ENCODE measurements at regions of chr14 and their contacts with region 1.

Region 1: GRCh38 chr14:65356327-65356852 is 56.1 kb upstream of the FUT8 start:
- DNase-seq: peak; percentile 100
- H3K4me3 ChIP-seq: no peak overlapping the region
- H3K27ac ChIP-seq: peak overlapping the region; percentile 77
- H3K4me1 ChIP-seq: peaks cover 57% of the 10 kb centered on the region
- H3K27me3 ChIP-seq: no peaks in the 10 kb centered on the region
- CTCF ChIP-seq: no peak

Region 2: DNA sequence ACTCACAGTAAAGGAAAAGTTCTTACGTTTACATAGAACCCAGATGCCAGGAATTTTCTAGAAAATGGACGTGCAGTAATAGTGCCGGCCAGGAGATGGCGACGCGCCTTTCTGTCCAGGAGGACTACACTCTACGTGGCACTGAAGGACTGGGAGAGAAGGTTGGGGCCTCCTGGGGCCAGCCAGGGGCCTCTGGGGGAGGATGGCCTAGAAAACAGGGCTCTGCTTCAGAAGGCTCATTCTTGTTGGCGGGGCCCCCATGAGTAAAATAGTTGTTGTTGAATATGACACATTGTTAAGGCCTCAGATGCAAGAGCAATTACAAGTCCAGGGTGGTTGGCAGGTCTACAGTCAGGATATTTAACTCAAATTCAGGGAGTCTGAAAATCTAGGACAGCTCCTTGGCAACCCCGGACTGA is 133.9 kb before region 1 on chr14:
- CTCF ChIA-PET with region 1: no interaction called
- dilution Hi-C with region 1: no loop called
- in situ Hi-C with region 1: loop called in 1 of 2 experiments (anchors 10 kb)
- intact Hi-C with region 1: loop called (anchors 5 kb)
- DNase-seq: peak; percentile 46
- H3K4me3 ChIP-seq: no peak overlapping the region
- H3K27ac ChIP-seq: no peak overlapping the region
- H3K4me1 ChIP-seq: peaks cover 11% of the 10 kb centered on the region
- H3K27me3 ChIP-seq: no peaks in the 10 kb centered on the region
- CTCF ChIP-seq: peak; percentile 90 to 92

Region 3: DNA sequence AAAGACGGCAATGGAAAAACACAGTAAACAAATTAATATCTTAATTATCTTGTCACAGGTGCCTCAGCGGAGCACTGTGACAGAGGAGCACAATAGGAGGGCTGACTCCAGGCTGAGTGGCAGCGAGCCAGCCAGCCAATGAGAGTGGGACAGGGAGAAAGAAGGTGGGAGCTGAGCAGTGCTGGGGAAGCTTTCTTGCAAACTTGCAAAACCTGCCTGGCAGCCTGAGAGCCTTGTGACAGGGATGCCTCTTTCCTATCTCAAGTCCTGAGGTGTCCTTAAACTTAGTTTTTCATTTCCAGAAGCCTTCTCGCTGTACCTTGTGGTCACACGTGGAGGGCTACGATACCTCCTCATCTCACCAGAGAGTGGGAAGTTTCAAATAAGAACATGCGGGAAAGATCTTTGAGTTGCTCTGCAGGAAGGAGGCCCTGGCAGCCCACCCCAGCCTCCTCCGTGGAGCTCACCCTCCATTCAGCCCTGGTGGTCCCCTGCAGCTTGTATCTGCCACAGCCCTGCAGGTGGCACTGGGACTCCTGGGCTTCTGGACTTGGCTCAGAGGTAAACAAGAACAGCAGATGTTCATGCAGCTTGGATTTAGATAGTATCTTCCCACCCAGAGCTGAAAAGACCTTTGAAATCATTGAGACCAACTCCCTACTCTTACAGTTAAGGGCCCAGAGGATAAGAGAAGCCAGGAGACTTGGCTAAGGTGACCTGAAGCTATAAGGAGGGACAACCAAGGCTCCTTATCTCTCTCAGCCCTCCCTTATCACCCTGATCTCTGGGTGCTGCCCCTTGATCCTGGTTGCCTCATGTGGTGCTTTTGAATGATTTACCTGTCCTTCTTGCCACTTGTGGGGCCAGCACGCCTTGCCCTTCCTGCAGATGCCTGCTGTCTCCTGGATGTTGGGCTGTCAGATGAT is 100.6 kb before region 1 on chr14:
- CTCF ChIA-PET with region 1: no interaction called
- dilution Hi-C with region 1: loop called (anchors 5 kb)
- in situ Hi-C with region 1: no loop called
- intact Hi-C with region 1: no loop called
- DNase-seq: peak; percentile 84
- H3K4me3 ChIP-seq: no peak overlapping the region
- H3K27ac ChIP-seq: peak overlapping the region; percentile 88
- H3K4me1 ChIP-seq: peaks cover 46% of the 10 kb centered on the region
- H3K27me3 ChIP-seq: no peaks in the 10 kb centered on the region
- CTCF ChIP-seq: peak in 1 of 2 donors; percentile 2

Region 4: DNA sequence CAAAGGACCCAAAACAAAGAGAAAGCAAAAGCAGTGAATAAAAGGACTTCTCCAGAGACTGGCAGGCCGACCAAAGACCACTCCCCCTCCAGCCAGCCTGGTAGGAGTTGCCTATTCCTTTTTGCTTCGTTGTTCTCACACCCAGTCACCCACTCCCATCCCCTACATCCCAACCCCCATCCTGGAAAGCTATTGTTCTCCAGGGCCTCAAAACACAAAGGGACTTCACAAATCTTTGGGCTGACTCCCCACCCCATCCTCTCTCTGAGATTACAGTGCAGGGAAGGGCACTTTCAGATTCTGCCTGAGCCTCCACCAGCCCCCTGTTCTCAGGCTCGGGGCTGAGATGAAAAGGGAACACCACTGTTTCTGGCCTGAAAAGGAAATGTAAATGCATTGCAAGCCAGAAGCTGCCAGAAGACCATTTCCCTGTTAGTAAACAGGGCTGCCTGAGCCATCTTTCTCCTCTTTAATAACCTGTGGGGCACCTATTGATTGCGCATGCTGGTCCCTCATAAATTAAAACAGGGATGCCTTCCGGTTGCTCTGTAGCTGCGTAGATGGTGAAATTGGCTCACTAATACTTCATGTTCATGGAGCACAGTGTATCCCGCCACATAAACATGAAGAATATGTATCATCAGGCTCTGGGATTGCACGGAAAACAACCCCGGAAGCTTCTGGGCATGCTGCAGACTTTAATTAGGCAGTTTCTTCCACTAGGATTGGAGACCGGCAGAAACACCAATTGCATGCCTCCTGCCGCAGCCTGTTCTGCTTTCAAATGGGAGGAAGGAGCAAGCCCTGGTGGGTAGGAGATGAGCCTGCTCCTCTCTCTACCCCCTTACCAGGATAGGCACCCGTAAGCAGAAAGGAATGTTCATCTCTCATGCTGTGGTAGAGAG is 74.1 kb before region 1 on chr14:
- CTCF ChIA-PET with region 1: no interaction called
- dilution Hi-C with region 1: no loop called
- in situ Hi-C with region 1: no loop called
- intact Hi-C with region 1: loop called (anchors 5 kb)
- DNase-seq: peak; percentile 57
- H3K4me3 ChIP-seq: no peak overlapping the region
- H3K27ac ChIP-seq: no peak overlapping the region
- H3K4me1 ChIP-seq: peaks cover 11% of the 10 kb centered on the region
- H3K27me3 ChIP-seq: no peaks in the 10 kb centered on the region
- CTCF ChIP-seq: no peak

Region 5: DNA sequence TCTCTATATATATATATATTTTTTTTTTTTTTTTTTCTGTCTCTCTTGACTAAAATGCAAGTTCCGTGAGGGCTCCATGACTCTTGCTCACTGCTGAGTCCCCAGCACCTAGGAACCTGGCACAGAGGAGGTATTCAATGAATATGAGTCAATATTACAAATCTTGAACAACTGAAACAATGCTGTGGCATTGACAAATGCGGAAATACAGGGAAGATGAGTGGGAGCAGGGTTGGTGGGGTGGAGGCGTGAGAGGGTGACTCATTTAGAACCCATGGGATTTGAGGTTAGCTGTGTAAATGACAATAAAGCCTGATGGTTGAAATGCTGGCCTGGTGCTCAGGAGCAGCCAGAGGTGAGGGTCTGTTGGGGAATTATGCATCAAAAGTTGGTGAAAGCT is 65.6 kb before region 1 on chr14:
- CTCF ChIA-PET with region 1: no interaction called
- dilution Hi-C with region 1: no loop called
- in situ Hi-C with region 1: no loop called
- intact Hi-C with region 1: loop called (anchors 5 kb)
- DNase-seq: peak; percentile 97
- H3K4me3 ChIP-seq: no peak overlapping the region
- H3K27ac ChIP-seq: peak overlapping the region; percentile 53
- H3K4me1 ChIP-seq: peaks cover 11% of the 10 kb centered on the region
- H3K27me3 ChIP-seq: no peaks in the 10 kb centered on the region
- CTCF ChIP-seq: no peak

Region 6: DNA sequence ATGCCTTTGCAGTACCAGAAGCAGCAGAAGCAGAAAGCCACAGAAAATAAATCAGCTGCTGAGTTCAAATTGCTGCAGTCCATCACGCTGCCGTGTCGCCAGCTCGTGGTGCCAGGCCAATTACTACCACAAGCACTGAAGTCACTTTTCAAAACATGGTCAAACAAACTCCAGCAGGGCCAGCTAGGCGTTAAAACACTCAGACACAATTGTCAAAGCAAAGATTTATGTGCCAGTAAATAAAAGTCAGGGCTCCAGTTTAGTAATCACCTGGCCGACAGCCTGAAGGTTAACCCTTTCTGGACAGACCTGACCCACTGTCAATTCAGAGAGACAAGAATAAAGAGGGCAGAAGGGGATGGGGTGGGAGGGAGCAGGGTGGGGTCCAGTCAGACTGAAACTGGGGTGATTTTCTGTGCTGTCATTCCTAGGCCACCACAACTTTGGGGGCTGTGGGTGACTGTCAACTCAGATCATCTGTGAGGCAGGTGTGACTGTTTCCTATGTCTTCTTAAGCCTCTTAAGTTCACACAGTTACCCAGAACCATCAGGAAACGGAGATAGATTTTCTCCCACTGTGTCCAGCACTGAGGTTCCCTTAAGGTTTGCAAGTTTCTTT is 53.7 kb before region 1 on chr14:
- CTCF ChIA-PET with region 1: no interaction called
- dilution Hi-C with region 1: no loop called
- in situ Hi-C with region 1: no loop called
- intact Hi-C with region 1: no loop called
- DNase-seq: no peak
- H3K4me3 ChIP-seq: no peak overlapping the region
- H3K27ac ChIP-seq: no peak overlapping the region
- H3K4me1 ChIP-seq: no peaks in the 10 kb centered on the region
- H3K27me3 ChIP-seq: no peaks in the 10 kb centered on the region
- CTCF ChIP-seq: no peak

Region 7: GRCh38 chr14:65414961-65415589 is 58.7 kb after region 1 on chr14:
- CTCF ChIA-PET with region 1: no interaction called
- dilution Hi-C with region 1: no loop called
- in situ Hi-C with region 1: no loop called
- intact Hi-C with region 1: no loop called
- DNase-seq: no peak
- H3K4me3 ChIP-seq: no peak overlapping the region
- H3K27ac ChIP-seq: no peak overlapping the region
- H3K4me1 ChIP-seq: peaks cover 16% of the 10 kb centered on the region
- H3K27me3 ChIP-seq: no peaks in the 10 kb centered on the region
- CTCF ChIP-seq: peak; percentile 35 to 61